Activated B cell treated with CpG ODN at 0.5 μM for 24 hours (primary cell): ENCODE measurements at regions of chr1 and their contacts with region 1.

Region 1: DNA sequence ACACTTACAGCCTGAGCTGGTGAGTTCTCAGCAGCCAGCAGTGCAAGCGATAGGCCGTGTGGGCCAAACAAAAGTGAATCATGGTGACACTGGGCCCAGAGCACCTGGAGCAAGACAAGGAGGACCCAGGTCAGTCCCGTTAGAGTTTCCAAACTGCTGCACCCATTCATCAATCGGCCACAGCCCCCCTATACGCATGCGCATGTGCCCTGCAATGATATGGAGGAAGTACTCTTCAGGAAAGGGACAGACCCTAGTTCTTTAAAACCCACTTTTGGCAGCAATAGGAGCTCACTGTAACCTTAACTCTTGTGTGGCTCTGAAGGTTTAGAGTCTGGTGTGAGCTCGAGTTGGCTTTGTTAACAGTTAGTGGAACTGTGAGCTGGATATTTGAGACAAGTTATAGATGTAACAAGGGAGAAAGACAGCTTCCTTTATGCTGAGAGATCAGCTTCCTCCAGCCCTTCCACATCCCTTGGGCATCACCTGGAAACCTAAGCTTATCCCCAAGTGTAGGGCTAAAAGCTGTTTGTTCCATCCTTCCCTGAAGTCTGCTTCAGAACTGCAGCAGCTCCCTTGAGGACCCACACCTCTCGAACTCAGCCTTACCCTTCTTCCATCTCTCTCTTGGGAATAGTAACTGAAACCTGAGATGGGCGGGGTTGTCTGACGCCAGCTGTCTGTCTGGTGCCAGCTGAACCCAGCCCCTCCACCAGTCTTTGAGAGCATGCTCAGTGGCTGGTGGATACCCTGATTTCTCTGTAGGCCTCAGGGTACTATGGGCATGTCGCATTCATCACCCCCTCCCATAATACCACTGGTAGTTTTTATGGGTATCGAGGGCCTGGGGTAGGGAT is 17.7 kb downstream of the NMNAT1 start:
- DNase-seq: peak; percentile 50
- ATAC-seq: peak; percentile 99
- H3K4me3 Mint-ChIP-seq: peak overlapping the region; percentile 44
- H3K27ac Mint-ChIP-seq: peak overlapping the region; percentile 75
- H3K4me1 Mint-ChIP-seq: peaks cover 15% of the 10 kb centered on the region
- H3K27me3 Mint-ChIP-seq: no peaks in the 10 kb centered on the region
- CTCF ChIP-seq: no peak

Region 2: GRCh38 chr1:9990944-9991343 is 30.0 kb after region 1 on chr1:
- CTCF ChIA-PET with region 1: no interaction called
- POLR2A ChIA-PET with region 1: interaction called, 10 read pairs
- intact Hi-C with region 1: loop called (anchors 2 kb)
- DNase-seq: no peak
- ATAC-seq: no peak
- H3K4me3 Mint-ChIP-seq: no peak overlapping the region
- H3K27ac Mint-ChIP-seq: no peak overlapping the region
- H3K4me1 Mint-ChIP-seq: peaks cover 2% of the 10 kb centered on the region
- H3K27me3 Mint-ChIP-seq: peaks cover 7% of the 10 kb centered on the region
- CTCF ChIP-seq: no peak

Region 3: DNA sequence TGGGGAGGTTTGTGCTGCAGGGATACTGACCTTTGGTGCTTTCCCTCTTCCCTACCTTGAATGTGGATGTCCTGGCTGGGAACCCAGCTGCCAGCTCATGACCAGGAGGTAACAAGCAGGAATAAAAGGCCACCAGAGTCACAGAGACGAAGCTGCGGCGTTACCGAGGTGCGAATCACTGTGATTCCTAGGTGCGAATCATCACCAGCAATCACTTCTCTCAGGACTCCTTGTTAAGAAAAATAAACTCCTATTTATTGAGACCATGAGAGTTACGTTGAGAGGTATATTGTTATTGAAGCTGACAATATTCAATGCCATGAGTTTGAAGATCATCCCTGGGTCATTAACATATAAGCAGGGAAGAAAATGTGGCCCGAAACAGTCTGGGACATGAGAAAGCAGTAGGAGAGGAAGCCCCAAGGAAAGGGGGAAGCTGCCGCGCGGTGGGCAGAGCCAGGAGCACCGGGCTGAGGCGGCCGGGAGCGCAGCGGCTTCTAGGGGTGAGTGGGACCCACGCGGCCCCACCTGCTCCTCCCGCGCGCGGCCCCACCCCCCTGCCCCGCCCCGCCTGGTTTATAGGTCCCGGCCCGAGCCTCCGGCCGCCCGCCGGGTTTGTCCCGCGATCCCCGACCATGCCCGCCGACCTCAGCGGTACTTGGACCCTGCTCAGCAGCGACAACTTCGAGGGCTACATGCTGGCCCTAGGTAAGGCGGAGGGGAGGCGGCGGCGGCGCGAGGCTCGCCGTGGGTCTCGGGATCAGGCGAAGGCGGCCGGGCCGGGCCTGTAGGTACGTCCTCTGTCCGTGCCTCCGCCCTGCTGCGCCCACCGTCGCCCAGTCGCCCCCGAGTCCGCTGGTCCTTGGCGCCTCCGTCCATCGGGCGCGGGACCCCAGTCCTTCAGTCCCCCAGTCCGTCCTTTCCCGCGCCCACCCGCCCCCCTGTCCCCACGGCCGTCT is 36.0 kb after region 1 on chr1 and contains the start of gene RBP7:
- CTCF ChIA-PET with region 1: no interaction called
- POLR2A ChIA-PET with region 1: interaction called, 12 read pairs
- intact Hi-C with region 1: loop called (anchors 2 kb)
- DNase-seq: peak; percentile 21
- ATAC-seq: peak; percentile 34
- H3K4me3 Mint-ChIP-seq: peak within 1 kb of the TSS; percentile 80
- H3K27ac Mint-ChIP-seq: no peak within 1 kb of the TSS
- H3K4me1 Mint-ChIP-seq: peaks cover 11% of the 10 kb centered on the region
- H3K27me3 Mint-ChIP-seq: peaks cover 28% of the 10 kb centered on the region
- CTCF ChIP-seq: no peak
- total RNA-seq, gene RBP7: not detected in 2 replicates